Endothelial cell of umbilical vein (primary cell): ENCODE measurements at regions of chr22 and their contacts with region 1.

Region 1: GRCh38 chr22:38705235-38706100 is at the start of gene GTPBP1:
- DNase-seq: peak; percentile 100
- H3K4me3 ChIP-seq: peak within 1 kb of the TSS; percentile 84 to 95 (median 89)
- H3K27ac ChIP-seq: peak within 1 kb of the TSS; percentile 67
- H3K4me1 ChIP-seq: peaks cover 33% of the 10 kb centered on the region
- H3K27me3 ChIP-seq: no peaks in the 10 kb centered on the region
- CTCF ChIP-seq: no peak
- POLR2A ChIP-seq: peak; percentile 85
- total RNA-seq, gene GTPBP1: 43.9 and 50.3 TPM in 2 replicates

Region 2: DNA sequence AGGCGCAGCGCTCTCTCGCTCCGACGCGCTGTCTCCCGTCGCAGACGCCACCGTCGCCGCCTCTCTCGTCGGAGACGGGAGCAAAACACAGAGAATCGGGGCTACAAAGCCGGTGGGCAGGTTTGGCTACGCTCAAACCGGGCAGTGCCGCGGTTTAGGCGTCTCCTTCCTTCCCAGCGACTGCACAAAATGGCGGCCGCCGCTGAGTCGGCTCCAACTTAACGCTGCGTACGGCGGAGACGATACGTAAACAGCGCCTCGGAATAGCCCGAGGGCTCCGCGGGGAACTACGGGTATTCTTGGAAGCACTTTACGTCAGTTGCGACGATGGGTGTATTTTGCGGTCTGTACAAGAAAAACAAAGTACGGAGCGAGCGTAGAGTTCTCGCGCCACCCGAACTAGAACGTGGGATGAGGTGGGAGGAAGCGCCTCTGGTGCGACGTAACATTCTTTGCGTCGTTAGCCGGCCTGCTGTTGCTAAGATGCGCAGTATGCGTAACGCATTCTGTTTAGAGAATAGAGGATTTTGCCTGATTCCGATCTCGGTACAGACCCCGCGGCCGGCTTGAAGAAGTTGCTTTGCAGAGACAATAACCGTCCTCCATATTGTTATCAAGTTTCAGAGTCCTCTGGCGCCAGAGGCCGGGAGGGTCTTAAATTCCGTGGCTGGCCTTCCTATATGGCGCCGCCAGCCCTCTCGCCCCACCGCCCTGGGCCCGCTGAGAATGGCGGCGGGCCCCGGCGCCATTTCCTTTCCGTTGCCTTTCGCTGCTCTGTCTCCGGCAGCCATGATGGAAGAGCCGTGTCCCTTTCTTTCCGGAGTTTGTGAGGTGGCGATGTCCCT is 199.1 kb before region 1 on chr22 and contains the start of gene DDX17:
- CTCF ChIA-PET with region 1: no interaction called
- POLR2A ChIA-PET with region 1: no interaction called
- dilution Hi-C with region 1: no loop called
- intact Hi-C with region 1: loop called (anchors 10 kb)
- DNase-seq: peak; percentile 98
- H3K4me3 ChIP-seq: peak within 1 kb of the TSS; percentile 66 to 89 (median 82)
- H3K27ac ChIP-seq: peak within 1 kb of the TSS; percentile 96
- H3K4me1 ChIP-seq: peaks cover 21% of the 10 kb centered on the region
- H3K27me3 ChIP-seq: no peaks in the 10 kb centered on the region
- CTCF ChIP-seq: no peak
- POLR2A ChIP-seq: peak; percentile 80
- total RNA-seq, gene DDX17: 377 and 393 TPM in 2 replicates

Region 3: GRCh38 chr22:38656256-38657044 is 49.0 kb before region 1 on chr22 and contains the starts of genes CBY1 and FAM227A:
- CTCF ChIA-PET with region 1: no interaction called
- POLR2A ChIA-PET with region 1: no interaction called
- dilution Hi-C with region 1: no loop called
- intact Hi-C with region 1: loop called (anchors 2 kb)
- DNase-seq: peak; percentile 87
- H3K4me3 ChIP-seq: peak within 1 kb of the TSS; percentile 31 to 94 (median 82)
- H3K27ac ChIP-seq: peak within 1 kb of the TSS; percentile 96
- H3K4me1 ChIP-seq: peaks cover 11% of the 10 kb centered on the region
- H3K27me3 ChIP-seq: no peaks in the 10 kb centered on the region
- CTCF ChIP-seq: no peak
- POLR2A ChIP-seq: peak; percentile 18
- total RNA-seq, gene CBY1: 34.4 and 37.0 TPM in 2 replicates
- total RNA-seq, gene FAM227A: 1.4 and 1.9 TPM in 2 replicates

Region 4: DNA sequence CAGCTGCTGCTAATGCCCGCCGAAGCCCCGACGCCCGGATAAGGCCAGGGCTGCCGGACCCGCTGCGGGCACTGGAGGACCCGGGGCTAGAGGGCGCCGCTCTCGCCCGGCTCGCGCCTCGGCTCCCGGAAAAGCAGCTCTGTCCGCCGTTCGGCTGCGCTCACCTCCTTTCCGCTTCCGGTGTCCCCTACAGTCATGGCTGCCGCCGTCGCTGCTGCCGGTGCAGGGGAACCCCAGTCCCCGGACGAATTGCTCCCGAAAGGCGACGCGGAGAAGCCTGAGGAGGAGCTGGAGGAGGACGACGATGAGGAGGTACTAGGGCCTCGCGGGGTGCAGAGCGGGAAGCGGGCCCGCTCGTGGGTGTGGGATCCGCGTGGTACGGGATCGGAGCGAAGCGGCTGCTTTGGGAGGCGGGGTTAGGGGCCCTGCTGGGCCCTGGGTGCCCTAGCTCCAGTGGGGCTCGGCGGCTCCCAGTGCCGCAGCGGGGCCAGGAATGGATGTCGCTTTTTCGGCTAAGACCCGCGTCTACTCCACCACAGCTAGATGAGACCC is 23.6 kb before region 1 on chr22 and contains the start of gene TOMM22:
- CTCF ChIA-PET with region 1: interaction called, 59 read pairs
- POLR2A ChIA-PET with region 1: interaction called, 3 read pairs
- dilution Hi-C with region 1: no loop called
- intact Hi-C with region 1: no loop called
- DNase-seq: peak; percentile 88
- H3K4me3 ChIP-seq: peak within 1 kb of the TSS; percentile 86 to 98 (median 92)
- H3K27ac ChIP-seq: peak within 1 kb of the TSS; percentile 64
- H3K4me1 ChIP-seq: peaks cover 11% of the 10 kb centered on the region
- H3K27me3 ChIP-seq: no peaks in the 10 kb centered on the region
- CTCF ChIP-seq: peak; percentile 72 to 81
- POLR2A ChIP-seq: peak; percentile 65
- total RNA-seq, gene TOMM22: 98.6 and 98.8 TPM in 2 replicates

Region 5: DNA sequence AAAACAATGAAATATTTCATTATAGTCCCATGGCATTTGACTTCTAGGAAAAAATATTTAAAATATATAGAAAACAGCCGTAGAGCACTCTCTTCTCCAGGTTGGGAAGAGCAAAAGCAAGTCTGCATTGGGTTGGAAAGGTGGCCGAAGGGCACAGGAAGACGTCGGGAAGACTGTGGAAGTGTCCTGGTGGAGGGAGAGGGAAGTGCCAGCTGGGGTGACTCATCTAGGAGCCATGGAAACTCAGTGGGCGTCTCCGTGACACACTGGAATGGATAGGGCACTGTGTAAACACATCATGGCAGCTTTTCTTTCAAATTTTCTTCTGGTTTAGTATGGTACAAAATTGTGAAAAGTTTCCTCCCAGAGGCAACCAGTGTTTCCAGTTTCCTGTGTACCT is 12.9 kb after region 1 on chr22:
- CTCF ChIA-PET with region 1: interaction called, 11 read pairs
- POLR2A ChIA-PET with region 1: interaction called, 4 read pairs
- dilution Hi-C with region 1: no loop called
- intact Hi-C with region 1: no loop called
- DNase-seq: peak; percentile 88
- H3K4me3 ChIP-seq: no peak overlapping the region
- H3K27ac ChIP-seq: peak overlapping the region; percentile 28
- H3K4me1 ChIP-seq: peaks cover 10% of the 10 kb centered on the region
- H3K27me3 ChIP-seq: no peaks in the 10 kb centered on the region
- CTCF ChIP-seq: peak; percentile 58 to 68
- POLR2A ChIP-seq: no peak

Region 6: DNA sequence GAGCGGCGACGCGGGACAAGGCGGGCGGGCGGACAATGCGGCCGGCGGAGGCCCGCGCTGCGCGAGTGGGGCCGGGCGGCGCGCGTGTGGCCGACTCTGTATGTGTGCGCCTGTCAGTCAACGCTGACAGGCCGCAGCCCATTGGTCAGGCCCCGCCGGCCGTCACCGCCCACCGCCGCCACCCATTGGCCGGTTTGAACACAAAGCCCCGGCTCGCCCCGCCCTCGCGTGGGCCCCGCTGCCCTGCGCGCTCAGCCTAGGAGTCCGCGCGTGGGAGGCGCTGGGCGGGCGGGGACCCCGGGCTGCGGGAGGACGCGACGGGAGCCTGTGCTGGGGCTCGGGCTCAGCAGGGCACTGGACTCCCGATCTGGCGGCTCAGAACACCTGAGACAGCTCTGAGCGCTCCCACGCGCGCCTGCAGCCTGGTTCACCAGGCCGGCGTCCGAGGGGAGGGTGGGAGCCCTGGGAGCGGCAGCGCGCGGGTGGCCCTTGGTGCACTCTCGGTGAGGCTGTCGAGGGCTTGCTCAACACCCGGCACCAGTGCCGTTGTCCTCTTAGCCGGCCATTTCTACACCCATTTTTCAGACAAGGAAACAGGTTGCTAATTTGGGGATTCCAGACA is 50.6 kb after region 1 on chr22 and contains the start of gene SUN2:
- CTCF ChIA-PET with region 1: no interaction called
- POLR2A ChIA-PET with region 1: interaction called, 3 read pairs
- dilution Hi-C with region 1: no loop called
- intact Hi-C with region 1: loop called (anchors 2 kb)
- DNase-seq: peak; percentile 88
- H3K4me3 ChIP-seq: peak within 1 kb of the TSS; percentile 55 to 74 (median 58)
- H3K27ac ChIP-seq: peak within 1 kb of the TSS; percentile 63
- H3K4me1 ChIP-seq: peaks cover 22% of the 10 kb centered on the region
- H3K27me3 ChIP-seq: no peaks in the 10 kb centered on the region
- CTCF ChIP-seq: no peak
- POLR2A ChIP-seq: peak; percentile 36
- total RNA-seq, gene SUN2: 133 and 137 TPM in 2 replicates

Region 7: GRCh38 chr22:38777087-38777671 is 71.7 kb after region 1 on chr22:
- CTCF ChIA-PET with region 1: no interaction called
- POLR2A ChIA-PET with region 1: no interaction called
- dilution Hi-C with region 1: no loop called
- intact Hi-C with region 1: no loop called
- DNase-seq: no peak
- H3K4me3 ChIP-seq: no peak overlapping the region
- H3K27ac ChIP-seq: no peak overlapping the region
- H3K4me1 ChIP-seq: no peaks in the 10 kb centered on the region
- H3K27me3 ChIP-seq: no peaks in the 10 kb centered on the region
- CTCF ChIP-seq: no peak
- POLR2A ChIP-seq: no peak

Region 8: GRCh38 chr22:38793721-38794466 is 88.4 kb after region 1 on chr22 and contains the start of gene DNAL4:
- CTCF ChIA-PET with region 1: no interaction called
- POLR2A ChIA-PET with region 1: no interaction called
- dilution Hi-C with region 1: no loop called
- intact Hi-C with region 1: no loop called
- DNase-seq: peak; percentile 99
- H3K4me3 ChIP-seq: peak within 1 kb of the TSS; percentile 60 to 86 (median 72)
- H3K27ac ChIP-seq: peak within 1 kb of the TSS; percentile 16
- H3K4me1 ChIP-seq: peaks cover 10% of the 10 kb centered on the region
- H3K27me3 ChIP-seq: peaks cover 0 to 2% of the 10 kb centered on the region in 2 experiments
- CTCF ChIP-seq: no peak
- POLR2A ChIP-seq: peak; percentile 32
- total RNA-seq, gene DNAL4: 12.2 and 12.9 TPM in 2 replicates

Region 9: GRCh38 chr22:38967451-38968450 is 262.3 kb after region 1 on chr22:
- CTCF ChIA-PET with region 1: no interaction called
- POLR2A ChIA-PET with region 1: no interaction called
- dilution Hi-C with region 1: no loop called
- intact Hi-C with region 1: no loop called
- DNase-seq: no peak
- H3K4me3 ChIP-seq: no peak overlapping the region
- H3K27ac ChIP-seq: no peak overlapping the region
- H3K4me1 ChIP-seq: no peaks in the 10 kb centered on the region
- H3K27me3 ChIP-seq: peaks cover 0 to 2% of the 10 kb centered on the region in 2 experiments
- CTCF ChIP-seq: no peak
- POLR2A ChIP-seq: no peak